ENCODE measurements at regions of chr5 and their contacts with region 1.

Region 1: GRCh38 chr5:74576941-74577456 is 63.5 kb downstream of the ENC1 start:
- DNase-seq: peak; percentile 12
- H3K4me3 Mint-ChIP-seq: peak overlapping the region; percentile 21
- H3K27ac Mint-ChIP-seq: peak overlapping the region; percentile 53
- H3K4me1 Mint-ChIP-seq: peaks cover 34% of the 10 kb centered on the region
- H3K27me3 Mint-ChIP-seq: peaks cover 12% of the 10 kb centered on the region

Region 2: GRCh38 chr5:73565139-73565968 is 1011.6 kb before region 1 on chr5 and contains the starts of genes ANKRA2 and UTP15:
- intact Hi-C with region 1: loop called (anchors 10 kb)
- DNase-seq: peak; percentile 98
- H3K4me3 Mint-ChIP-seq: peak within 1 kb of the TSS; percentile 95
- H3K27ac Mint-ChIP-seq: peak within 1 kb of the TSS; percentile 99
- H3K4me1 Mint-ChIP-seq: peaks cover 32% of the 10 kb centered on the region
- H3K27me3 Mint-ChIP-seq: no peaks in the 10 kb centered on the region
- total RNA-seq, gene ANKRA2: 15.8 and 18.8 TPM in 2 replicates
- total RNA-seq, gene UTP15: 61.0 and 64.1 TPM in 2 replicates

Region 3: DNA sequence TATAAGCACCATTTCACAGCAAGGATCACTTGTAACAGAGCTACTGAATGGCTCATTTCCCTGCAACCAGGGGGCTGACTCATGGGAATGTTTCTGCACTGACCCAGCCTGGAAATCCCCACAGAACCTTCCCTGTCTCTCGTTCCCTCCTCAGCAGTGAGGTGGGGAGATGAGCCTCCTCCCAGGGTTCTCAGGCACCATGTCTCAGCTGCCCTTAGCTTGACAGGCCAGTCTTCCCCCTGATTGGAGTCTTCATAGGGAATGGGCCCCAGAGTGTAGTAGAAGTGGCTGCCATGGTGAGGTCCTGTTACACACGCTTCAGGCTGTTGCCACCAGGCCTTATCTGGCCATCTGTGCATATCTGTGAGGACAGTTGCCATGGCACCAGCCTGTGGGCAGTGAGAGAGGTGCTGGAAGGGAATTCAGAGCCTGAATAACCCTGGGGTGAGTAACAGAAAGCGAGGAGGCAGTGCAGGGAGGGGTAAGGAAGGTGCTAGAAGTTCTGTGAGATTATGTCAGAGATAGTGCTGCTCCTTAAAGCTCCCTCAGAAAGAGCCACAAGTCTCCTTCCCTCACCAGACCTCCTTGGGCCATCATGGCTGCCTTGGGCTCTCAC is 260.8 kb before region 1 on chr5:
- intact Hi-C with region 1: loop called (anchors 2 kb)
- DNase-seq: no peak
- H3K4me3 Mint-ChIP-seq: no peak overlapping the region
- H3K27ac Mint-ChIP-seq: no peak overlapping the region
- H3K4me1 Mint-ChIP-seq: no peaks in the 10 kb centered on the region
- H3K27me3 Mint-ChIP-seq: peaks cover 15% of the 10 kb centered on the region

Region 4: GRCh38 chr5:74556631-74557595 is 20.1 kb before region 1 on chr5:
- intact Hi-C with region 1: no loop called
- DNase-seq: no peak
- H3K4me3 Mint-ChIP-seq: no peak overlapping the region
- H3K27ac Mint-ChIP-seq: no peak overlapping the region
- H3K4me1 Mint-ChIP-seq: no peaks in the 10 kb centered on the region
- H3K27me3 Mint-ChIP-seq: peaks cover 11% of the 10 kb centered on the region

Region 5: GRCh38 chr5:74640450-74640953 is 63.5 kb after region 1 on chr5 and contains the start of gene ENC1:
- intact Hi-C with region 1: loop called (anchors 1 kb)
- DNase-seq: peak; percentile 72
- H3K4me3 Mint-ChIP-seq: peak within 1 kb of the TSS; percentile 86
- H3K27ac Mint-ChIP-seq: peak within 1 kb of the TSS; percentile 64
- H3K4me1 Mint-ChIP-seq: peaks cover 49% of the 10 kb centered on the region
- H3K27me3 Mint-ChIP-seq: peaks cover 39% of the 10 kb centered on the region
- total RNA-seq, gene ENC1: 2.7 and 3.2 TPM in 2 replicates

Region 6: GRCh38 chr5:75320341-75320740 is 743.3 kb after region 1 on chr5:
- intact Hi-C with region 1: loop called (anchors 5 kb)
- DNase-seq: no peak
- H3K4me3 Mint-ChIP-seq: no peak overlapping the region
- H3K27ac Mint-ChIP-seq: no peak overlapping the region
- H3K4me1 Mint-ChIP-seq: peaks cover 13% of the 10 kb centered on the region
- H3K27me3 Mint-ChIP-seq: peaks cover 2% of the 10 kb centered on the region

Region 7: GRCh38 chr5:75566710-75567309 is 989.8 kb after region 1 on chr5:
- intact Hi-C with region 1: loop called (anchors 5 kb)
- DNase-seq: peak; percentile 39
- H3K4me3 Mint-ChIP-seq: peak overlapping the region; percentile 29
- H3K27ac Mint-ChIP-seq: peak overlapping the region; percentile 81
- H3K4me1 Mint-ChIP-seq: peaks cover 53% of the 10 kb centered on the region
- H3K27me3 Mint-ChIP-seq: no peaks in the 10 kb centered on the region